K562 (cell line): ENCODE measurements at regions of chr1 and their contacts with region 1.

Region 1: DNA sequence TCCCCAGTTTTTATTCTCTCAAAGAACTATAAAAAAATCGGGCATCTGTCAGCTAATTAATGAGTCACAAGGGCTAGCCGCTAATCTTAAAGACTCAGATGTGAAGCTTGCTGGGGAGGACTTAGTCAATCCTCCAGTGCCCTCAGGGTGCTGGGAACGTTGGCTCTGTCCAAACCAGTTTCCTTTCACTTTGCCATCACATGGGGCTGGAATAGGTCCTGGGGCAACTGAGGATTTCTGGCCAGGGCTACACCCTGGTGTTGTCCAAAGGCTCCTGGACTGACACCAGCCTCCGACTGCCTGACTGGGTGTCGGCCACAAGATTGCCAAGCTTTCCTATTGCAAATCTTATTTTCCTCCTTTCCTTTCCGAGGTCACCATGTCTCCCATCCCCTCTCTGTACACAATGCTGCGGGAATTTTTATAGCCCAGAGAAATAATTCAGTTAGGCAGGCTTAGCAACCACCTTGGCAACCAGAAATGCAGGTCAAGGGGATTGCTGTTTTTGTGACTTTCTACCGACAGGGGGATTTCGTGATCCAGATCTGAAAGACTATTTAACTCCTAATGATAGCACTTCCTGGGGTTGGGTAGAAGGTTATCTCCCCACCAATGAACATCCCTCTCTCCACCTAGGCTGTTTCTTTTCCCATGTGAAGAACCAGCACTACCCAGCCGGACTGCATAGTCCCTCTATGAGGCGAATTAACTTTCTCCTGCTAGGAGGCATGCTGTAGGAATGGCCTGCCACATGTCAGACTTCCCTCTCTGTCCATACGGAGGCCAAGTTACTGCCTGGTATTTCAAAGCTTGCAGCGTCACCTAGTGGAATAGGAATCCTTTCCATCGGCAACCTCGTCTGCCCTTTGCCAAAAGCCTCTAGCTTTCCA is 29.9 kb upstream of the CTBS start:
- DNase-seq: peak; percentile 32 to 80 (median 50)
- ATAC-seq: peak; percentile 92
- H3K4me3 ChIP-seq: peak overlapping the region; percentile 9; the same call in 1 of the 2 replicates
- H3K27ac ChIP-seq: no peak overlapping the region; the same call in 2 of the 3 replicates
- H3K4me1 ChIP-seq: peaks cover 7 to 14% of the 10 kb centered on the region in 2 experiments
- H3K27me3 ChIP-seq: no peaks in the 10 kb centered on the region
- CTCF ChIP-seq: peak; percentile 82 to 93 (median 91)
- EP300 ChIP-seq: no peak
- POLR2A ChIP-seq: no peak
- RAD21 ChIP-seq: peak; percentile 90 to 93

Region 2: GRCh38 chr1:84143796-84144565 is 460.2 kb before region 1 on chr1 and contains the start of gene PRKACB:
- CTCF ChIA-PET with region 1: no interaction called
- POLR2A ChIA-PET with region 1: no interaction called
- in situ Hi-C with region 1: no loop called
- intact Hi-C with region 1: loop called (anchors 5 kb)
- DNase-seq: no peak
- ATAC-seq: no peak
- H3K4me3 ChIP-seq: no peak within 1 kb of the TSS
- H3K27ac ChIP-seq: no peak within 1 kb of the TSS
- H3K4me1 ChIP-seq: no peaks in the 10 kb centered on the region
- H3K27me3 ChIP-seq: no peaks in the 10 kb centered on the region
- CTCF ChIP-seq: no peak
- EP300 ChIP-seq: no peak
- POLR2A ChIP-seq: no peak
- RAD21 ChIP-seq: no peak
- polyA plus RNA-seq, gene PRKACB: 1.1 to 1.5 TPM

Region 3: GRCh38 chr1:84506002-84506728 is 98.0 kb before region 1 on chr1 and contains the starts of genes GNG5 and SPATA1:
- CTCF ChIA-PET with region 1: no interaction called
- POLR2A ChIA-PET with region 1: no interaction called
- in situ Hi-C with region 1: no loop called
- intact Hi-C with region 1: loop called (anchors 1 kb)
- DNase-seq: peak; percentile 95 to 98 (median 96)
- ATAC-seq: peak; percentile 90
- H3K4me3 ChIP-seq: peak within 1 kb of the TSS; percentile 69
- H3K27ac ChIP-seq: peak within 1 kb of the TSS; percentile 97
- H3K4me1 ChIP-seq: peaks cover 4 to 10% of the 10 kb centered on the region in 2 experiments; a peak in 4 of 5 replicates
- H3K27me3 ChIP-seq: no peaks in the 10 kb centered on the region
- CTCF ChIP-seq: no peak
- EP300 ChIP-seq: peak; percentile 61
- POLR2A ChIP-seq: peak; percentile 98
- RAD21 ChIP-seq: peak in 1 of 2 experiments; percentile 27; a peak in 2 of 4 replicates
- polyA plus RNA-seq, gene GNG5: 242 to 243 TPM
- polyA plus RNA-seq, gene SPATA1: 1.1 TPM

Region 4: DNA sequence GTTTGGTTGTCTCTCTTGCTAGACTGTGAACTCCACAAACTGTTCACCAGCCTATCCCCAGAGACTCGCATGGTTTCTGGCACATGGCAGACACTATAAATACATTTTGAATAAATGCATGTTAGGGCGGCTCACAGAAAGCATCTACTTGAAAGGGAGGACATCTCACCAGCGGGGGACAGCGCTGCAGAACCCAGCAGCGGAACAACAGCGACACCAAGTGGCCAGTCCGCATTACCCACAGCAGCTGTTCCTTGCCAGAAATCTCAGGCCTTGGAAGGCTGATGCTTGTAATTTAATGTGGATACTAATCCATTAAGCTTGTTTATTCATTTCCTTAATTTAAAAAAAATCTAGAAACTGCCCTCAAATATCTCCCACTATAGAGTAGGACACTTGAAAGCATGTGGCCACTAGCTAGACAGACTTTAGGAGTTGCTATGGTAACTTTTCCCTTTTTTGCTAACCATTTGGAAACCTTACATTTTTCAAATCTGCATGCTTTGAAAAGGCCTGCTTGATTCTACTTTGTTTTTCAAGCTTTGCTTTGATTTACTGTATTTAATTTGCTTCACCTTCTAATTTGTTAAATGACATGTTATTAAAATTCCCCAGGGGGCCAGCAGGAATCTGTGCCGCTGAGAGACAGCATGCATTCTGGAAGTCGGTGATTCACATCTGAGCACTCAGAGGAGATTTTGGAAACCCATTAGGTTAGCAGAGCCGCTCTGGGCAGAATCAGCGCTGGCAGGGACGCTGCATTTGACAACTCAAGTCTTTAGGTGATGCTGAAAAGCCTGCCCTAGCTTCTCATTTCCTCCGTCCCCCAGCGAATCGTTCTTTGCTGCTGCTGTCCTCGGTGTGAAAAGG is 149.6 kb after region 1 on chr1:
- CTCF ChIA-PET with region 1: interaction called, 7 read pairs
- POLR2A ChIA-PET with region 1: no interaction called
- in situ Hi-C with region 1: no loop called
- intact Hi-C with region 1: loop called (anchors 2 kb)
- DNase-seq: peak; percentile 66 to 78 (median 76)
- ATAC-seq: peak; percentile 94
- H3K4me3 ChIP-seq: no peak overlapping the region
- H3K27ac ChIP-seq: no peak overlapping the region
- H3K4me1 ChIP-seq: no peaks in the 10 kb centered on the region; a peak in 1 of 5 replicates
- H3K27me3 ChIP-seq: peaks cover 0 to 4% of the 10 kb centered on the region in 2 experiments; a peak in 2 of 5 replicates
- CTCF ChIP-seq: peak; percentile 95 to 97 (median 96)
- EP300 ChIP-seq: no peak
- POLR2A ChIP-seq: no peak
- RAD21 ChIP-seq: peak; percentile 95 to 98